A673 (cell line): ENCODE measurements at regions of chr6 and their contacts with region 1.

Region 1: GRCh38 chr6:31739639-31740396 is at the start of gene MSH5:
- DNase-seq: peak; percentile 100
- H3K4me3 ChIP-seq: peak within 1 kb of the TSS; percentile 71
- H3K27ac ChIP-seq: peak within 1 kb of the TSS; percentile 95
- H3K4me1 ChIP-seq: peaks cover 36% of the 10 kb centered on the region
- H3K27me3 ChIP-seq: no peaks in the 10 kb centered on the region
- CTCF ChIP-seq: no peak
- total RNA-seq, gene MSH5: 76.4 and 102 TPM in 2 replicates

Region 2: GRCh38 chr6:30914076-30914853 is 825.6 kb before region 1 on chr6 and contains the start of gene VARS2:
- CTCF ChIA-PET with region 1: no interaction called
- POLR2A ChIA-PET with region 1: no interaction called
- intact Hi-C with region 1: no loop called
- DNase-seq: peak; percentile 89
- H3K4me3 ChIP-seq: peak within 1 kb of the TSS; percentile 62
- H3K27ac ChIP-seq: peak within 1 kb of the TSS; percentile 75
- H3K4me1 ChIP-seq: peaks cover 13% of the 10 kb centered on the region
- H3K27me3 ChIP-seq: no peaks in the 10 kb centered on the region
- CTCF ChIP-seq: peak; percentile 40
- total RNA-seq, gene VARS2: 48.4 and 53.4 TPM in 2 replicates

Region 3: GRCh38 chr6:31665501-31666336 is 74.1 kb before region 1 on chr6 and contains the start of gene CSNK2B:
- CTCF ChIA-PET with region 1: no interaction called
- POLR2A ChIA-PET with region 1: no interaction called
- intact Hi-C with region 1: loop called (anchors 2 kb)
- DNase-seq: peak; percentile 99
- H3K4me3 ChIP-seq: peak within 1 kb of the TSS; percentile 94
- H3K27ac ChIP-seq: peak within 1 kb of the TSS; percentile 97
- H3K4me1 ChIP-seq: peaks cover 20% of the 10 kb centered on the region
- H3K27me3 ChIP-seq: no peaks in the 10 kb centered on the region
- CTCF ChIP-seq: no peak
- total RNA-seq, gene CSNK2B: 252 and 253 TPM in 2 replicates

Region 4: GRCh38 chr6:31769684-31770371 is 30.0 kb after region 1 on chr6:
- CTCF ChIA-PET with region 1: interaction called, 12 read pairs
- POLR2A ChIA-PET with region 1: no interaction called
- intact Hi-C with region 1: no loop called
- DNase-seq: peak; percentile 63
- H3K4me3 ChIP-seq: no peak overlapping the region
- H3K27ac ChIP-seq: no peak overlapping the region
- H3K4me1 ChIP-seq: no peaks in the 10 kb centered on the region
- H3K27me3 ChIP-seq: no peaks in the 10 kb centered on the region
- CTCF ChIP-seq: peak; percentile 79

Region 5: GRCh38 chr6:31791324-31792089 is 51.7 kb after region 1 on chr6:
- CTCF ChIA-PET with region 1: interaction called, 5 read pairs
- POLR2A ChIA-PET with region 1: no interaction called
- intact Hi-C with region 1: loop called (anchors 5 kb)
- DNase-seq: peak; percentile 80
- H3K4me3 ChIP-seq: no peak overlapping the region
- H3K27ac ChIP-seq: no peak overlapping the region
- H3K4me1 ChIP-seq: peaks cover 11% of the 10 kb centered on the region
- H3K27me3 ChIP-seq: no peaks in the 10 kb centered on the region
- CTCF ChIP-seq: peak; percentile 77

Region 6: GRCh38 chr6:31862344-31863227 is 122.8 kb after region 1 on chr6 and contains the start of gene NEU1:
- CTCF ChIA-PET with region 1: no interaction called
- POLR2A ChIA-PET with region 1: no interaction called
- intact Hi-C with region 1: loop called (anchors 1 kb)
- DNase-seq: peak; percentile 100
- H3K4me3 ChIP-seq: peak within 1 kb of the TSS; percentile 72
- H3K27ac ChIP-seq: peak within 1 kb of the TSS; percentile 81
- H3K4me1 ChIP-seq: peaks cover 6% of the 10 kb centered on the region
- H3K27me3 ChIP-seq: no peaks in the 10 kb centered on the region
- CTCF ChIP-seq: no peak
- total RNA-seq, gene NEU1: 28.5 and 34.3 TPM in 2 replicates

Region 7: GRCh38 chr6:31888276-31889258 is 148.7 kb after region 1 on chr6:
- CTCF ChIA-PET with region 1: no interaction called
- POLR2A ChIA-PET with region 1: no interaction called
- intact Hi-C with region 1: no loop called
- DNase-seq: peak; percentile 50
- H3K4me3 ChIP-seq: no peak overlapping the region
- H3K27ac ChIP-seq: no peak overlapping the region
- H3K4me1 ChIP-seq: no peaks in the 10 kb centered on the region
- H3K27me3 ChIP-seq: no peaks in the 10 kb centered on the region
- CTCF ChIP-seq: peak; percentile 90